ENCODE measurements at regions of chr9 and their contacts with region 1.

Region 1: DNA sequence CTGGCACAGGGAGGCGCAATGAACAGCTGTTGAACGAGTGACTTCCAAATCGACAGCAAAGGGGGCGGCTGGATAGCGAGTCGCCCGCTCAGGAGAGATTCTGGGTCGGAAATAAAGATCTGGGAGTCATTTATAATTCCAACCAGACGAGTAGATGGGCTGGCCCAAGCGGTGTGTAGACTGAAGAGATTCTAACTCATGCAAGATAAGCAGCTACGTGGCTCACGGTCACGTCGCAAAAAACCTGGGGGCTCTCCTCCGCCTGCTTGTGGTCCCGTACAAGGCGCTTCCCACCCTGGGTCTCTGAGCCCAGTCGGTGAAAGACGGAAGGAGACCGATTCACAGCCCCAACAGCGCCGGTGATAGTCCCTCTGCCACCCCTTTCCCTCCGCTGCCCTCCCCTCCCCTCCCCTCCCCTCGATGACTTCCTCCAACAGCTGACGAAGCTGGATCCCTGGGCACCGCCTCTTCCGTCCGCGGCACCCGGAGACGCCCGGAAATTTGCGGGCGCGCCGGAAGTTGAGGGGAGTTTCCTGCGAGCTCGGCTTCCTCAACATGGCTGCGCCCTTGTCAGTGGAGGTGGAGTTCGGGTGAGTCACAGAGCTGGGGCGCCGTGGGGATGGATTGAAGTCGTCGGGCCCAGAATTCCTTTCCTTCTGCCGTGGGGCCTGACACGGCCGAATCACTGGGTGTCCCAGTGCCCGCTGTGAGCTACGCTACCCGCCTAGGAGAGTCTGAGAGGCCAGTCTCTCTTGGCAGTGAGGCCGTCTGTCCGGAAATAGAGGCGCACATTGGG is at the start of gene URM1:
- DNase-seq: peak; percentile 70 to 91
- H3K4me3 ChIP-seq: peak within 1 kb of the TSS; percentile 82 to 96 (median 95)
- H3K27ac ChIP-seq: no peak within 1 kb of the TSS; the same call in 1 of the 2 replicates
- H3K4me1 ChIP-seq: peaks cover 0 to 8% (median 3%) of the 10 kb centered on the region in 4 experiments; a peak in 4 of 7 replicates
- H3K27me3 ChIP-seq: peaks cover 9 to 24% (median 13%) of the 10 kb centered on the region in 4 experiments
- CTCF ChIP-seq: no peak
- EP300 ChIP-seq: no peak
- POLR2A ChIP-seq: peak in 1 of 2 experiments; percentile 63; a peak in 2 of 3 replicates
- RAD21 ChIP-seq: no peak
- total RNA-seq, gene URM1: 60.5 and 62.3 TPM in 2 replicates

Region 2: GRCh38 chr9:128389395-128390149 is 18.5 kb after region 1 on chr9:
- CTCF ChIA-PET with region 1: interaction called, 323 read pairs
- POLR2A ChIA-PET with region 1: interaction called, 52 read pairs
- DNase-seq: no peak
- H3K4me3 ChIP-seq: no peak overlapping the region
- H3K27ac ChIP-seq: no peak overlapping the region
- H3K4me1 ChIP-seq: peaks cover 13 to 58% (median 51%) of the 10 kb centered on the region in 4 experiments
- H3K27me3 ChIP-seq: peaks cover 60 to 99% (median 93%) of the 10 kb centered on the region in 4 experiments
- CTCF ChIP-seq: no peak
- EP300 ChIP-seq: no peak
- POLR2A ChIP-seq: no peak
- RAD21 ChIP-seq: no peak

Region 3: GRCh38 chr9:128396970-128397613 is 26.1 kb after region 1 on chr9:
- CTCF ChIA-PET with region 1: interaction called, 544 read pairs
- POLR2A ChIA-PET with region 1: interaction called, 11 read pairs
- DNase-seq: peak in 1 of 2 experiments; percentile 57
- H3K4me3 ChIP-seq: no peak overlapping the region
- H3K27ac ChIP-seq: no peak overlapping the region
- H3K4me1 ChIP-seq: peaks cover 9 to 28% (median 21%) of the 10 kb centered on the region in 4 experiments
- H3K27me3 ChIP-seq: peaks cover 85 to 100% (median 96%) of the 10 kb centered on the region in 4 experiments
- CTCF ChIP-seq: no peak
- EP300 ChIP-seq: peak in 1 of 2 experiments; percentile 43; a peak in 1 of 3 replicates
- POLR2A ChIP-seq: no peak
- RAD21 ChIP-seq: no peak

Measured in H1 (cell line).